ENCODE measurements at regions of chr7 and their contacts with region 1.

Region 1: GRCh38 chr7:45923290-45923689 is 2.2 kb upstream of the IGFBP3 start:
- DNase-seq: peak; percentile 85
- H3K4me3 ChIP-seq: peak overlapping the region in 2 of 4 donors; percentile 56 to 66
- H3K27ac ChIP-seq: peak overlapping the region in 1 of 4 donors; percentile 81
- H3K4me1 ChIP-seq: peaks cover 0 to 47% (median 45%) of the 10 kb centered on the region in 4 donors
- H3K27me3 ChIP-seq: peaks cover 6 to 38% (median 12%) of the 10 kb centered on the region in 3 donors
- CTCF ChIP-seq: peak; percentile 61 to 88 (median 74)
- EP300 ChIP-seq: no peak
- POLR2A ChIP-seq: no peak

Region 2: DNA sequence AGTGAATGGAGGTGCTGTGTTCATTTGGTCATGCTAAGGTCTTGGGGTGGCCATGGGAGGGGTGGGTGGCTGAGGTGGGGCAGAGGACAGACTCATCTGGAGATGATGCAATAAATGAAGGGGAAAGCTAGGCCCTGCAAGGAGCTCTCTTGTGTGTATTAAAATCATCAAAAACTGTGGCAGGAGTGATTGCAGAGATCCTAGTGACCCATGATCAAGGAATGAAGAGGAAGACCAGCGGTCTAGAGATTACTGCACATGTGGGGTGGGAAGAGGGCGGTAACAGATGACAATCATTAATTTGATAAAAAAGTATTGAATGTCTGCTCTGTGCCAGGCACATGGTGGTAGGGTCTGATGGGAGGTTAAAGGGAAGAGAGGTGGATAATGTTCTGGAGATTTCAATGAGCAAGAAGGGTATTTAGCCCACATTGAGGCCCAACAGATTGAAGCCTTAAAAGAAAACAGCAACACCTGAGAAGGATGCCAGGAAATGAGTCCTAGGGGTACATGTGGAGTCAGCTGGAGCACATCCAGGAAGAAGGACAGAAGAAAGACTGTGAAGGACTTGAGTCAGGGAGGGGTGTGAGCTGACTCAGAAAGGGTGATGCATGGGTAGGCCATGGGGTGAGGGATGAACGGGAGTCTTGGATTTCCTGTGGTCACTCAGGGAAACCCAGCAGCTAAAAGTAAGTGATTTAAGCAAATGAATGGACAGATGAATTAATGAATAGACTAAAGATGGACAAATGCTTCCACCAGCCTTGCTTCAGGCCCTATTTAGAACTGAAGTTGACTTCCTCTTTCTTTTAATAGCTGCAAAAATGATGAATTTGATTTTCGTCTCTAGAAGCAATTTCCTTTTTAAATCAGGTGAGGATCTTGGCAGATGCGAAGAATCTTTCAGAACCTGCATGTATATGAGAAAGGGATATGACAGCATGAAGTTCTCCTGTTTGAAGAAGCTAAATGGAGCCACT is 80.9 kb after region 1 on chr7:
- intact Hi-C with region 1: no loop called
- DNase-seq: no peak
- H3K4me3 ChIP-seq: no peak overlapping the region
- H3K27ac ChIP-seq: no peak overlapping the region
- H3K4me1 ChIP-seq: no peaks in the 10 kb centered on the region
- H3K27me3 ChIP-seq: no peaks in the 10 kb centered on the region
- CTCF ChIP-seq: no peak
- EP300 ChIP-seq: no peak
- POLR2A ChIP-seq: no peak

Region 3: DNA sequence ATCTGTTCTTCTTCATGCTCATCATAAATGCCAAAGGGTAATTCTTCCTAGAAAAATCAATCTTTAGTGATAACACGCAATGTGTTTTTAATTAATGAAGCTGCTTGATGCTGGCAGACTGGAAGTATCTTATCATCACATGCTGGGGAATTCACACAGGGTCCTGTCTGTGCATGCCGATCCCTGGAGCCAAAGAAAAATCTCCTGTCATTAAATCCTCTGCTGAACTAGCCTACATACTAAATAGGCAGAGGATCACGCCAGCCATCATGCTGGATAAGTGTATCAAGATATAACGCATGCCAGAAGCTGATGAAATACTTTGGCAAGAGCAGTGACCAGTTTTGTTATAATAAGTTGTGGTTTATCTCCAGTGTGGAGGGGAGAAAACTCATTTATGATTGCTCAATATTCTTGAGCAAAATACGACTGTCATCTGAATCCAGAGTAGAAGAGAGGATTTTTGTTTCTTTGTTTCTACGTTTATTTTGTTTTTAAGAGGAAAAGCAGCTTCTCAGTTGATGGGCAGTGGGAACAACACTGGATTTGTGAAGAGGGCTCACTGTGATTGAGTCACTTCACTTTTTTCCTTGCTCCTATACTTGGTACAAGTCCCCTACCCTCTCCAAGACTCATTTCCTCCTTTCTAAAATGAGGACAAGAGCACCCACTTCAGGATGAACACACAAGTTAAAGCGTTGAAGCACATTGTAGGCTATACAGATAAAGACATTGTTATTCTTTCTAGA is 1009.6 kb after region 1 on chr7:
- intact Hi-C with region 1: loop called (anchors 10 kb)
- DNase-seq: peak; percentile 80
- H3K4me3 ChIP-seq: no peak overlapping the region
- H3K27ac ChIP-seq: peak overlapping the region in 3 of 4 donors; percentile 31 to 61 (median 38)
- H3K4me1 ChIP-seq: peaks cover 0 to 15% (median 12%) of the 10 kb centered on the region in 4 donors
- H3K27me3 ChIP-seq: no peaks in the 10 kb centered on the region
- CTCF ChIP-seq: no peak
- EP300 ChIP-seq: no peak
- POLR2A ChIP-seq: no peak

Region 4: DNA sequence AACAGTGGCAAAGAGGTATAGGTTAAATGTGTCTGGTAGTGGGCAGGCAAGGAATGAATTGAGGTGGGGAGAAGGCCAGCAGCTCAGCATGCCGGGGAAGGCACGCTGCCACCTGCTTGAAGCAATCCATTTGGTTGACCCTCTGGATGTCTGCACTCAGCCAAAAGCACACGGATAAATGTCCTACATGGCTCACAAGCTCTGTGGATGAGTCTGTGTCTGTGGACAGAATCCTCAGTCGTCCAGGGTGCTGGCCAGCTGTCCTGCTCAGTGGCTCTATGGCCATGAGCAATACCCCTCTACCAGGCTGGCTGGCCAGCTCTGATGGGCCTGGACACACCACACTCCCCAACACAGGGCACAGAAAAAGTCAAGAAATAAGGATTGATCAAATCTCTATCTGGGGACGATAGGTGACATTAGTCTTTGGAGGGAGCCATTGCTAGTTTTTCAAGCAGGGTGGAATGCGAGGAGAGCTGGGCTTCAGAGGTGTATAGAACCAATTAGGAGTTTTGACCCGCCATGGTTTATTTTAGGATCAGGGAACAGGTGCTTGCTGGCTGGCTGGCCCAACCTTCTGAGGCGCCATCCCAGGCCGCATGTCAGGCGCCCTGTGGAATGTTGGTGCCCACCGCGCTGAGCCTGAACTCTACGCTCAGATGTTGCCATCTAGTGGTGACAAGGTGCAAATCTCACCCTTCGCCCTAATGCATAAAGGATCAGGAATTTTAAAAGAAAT is 1165.2 kb after region 1 on chr7:
- intact Hi-C with region 1: loop called (anchors 1 kb)
- DNase-seq: peak; percentile 77
- H3K4me3 ChIP-seq: no peak overlapping the region
- H3K27ac ChIP-seq: no peak overlapping the region
- H3K4me1 ChIP-seq: peaks cover 0 to 10% (median 8%) of the 10 kb centered on the region in 4 donors
- H3K27me3 ChIP-seq: no peaks in the 10 kb centered on the region
- CTCF ChIP-seq: peak; percentile 73 to 87 (median 84)
- EP300 ChIP-seq: no peak
- POLR2A ChIP-seq: no peak

Region 5: GRCh38 chr7:47179812-47180515 is 1256.7 kb after region 1 on chr7:
- intact Hi-C with region 1: loop called (anchors 1 kb)
- DNase-seq: no peak
- H3K4me3 ChIP-seq: no peak overlapping the region
- H3K27ac ChIP-seq: peak overlapping the region in 1 of 4 donors; percentile 21
- H3K4me1 ChIP-seq: peaks cover 0 to 54% (median 50%) of the 10 kb centered on the region in 4 donors
- H3K27me3 ChIP-seq: no peaks in the 10 kb centered on the region
- CTCF ChIP-seq: peak; percentile 42 to 83 (median 78)
- EP300 ChIP-seq: no peak
- POLR2A ChIP-seq: no peak

Region 6: DNA sequence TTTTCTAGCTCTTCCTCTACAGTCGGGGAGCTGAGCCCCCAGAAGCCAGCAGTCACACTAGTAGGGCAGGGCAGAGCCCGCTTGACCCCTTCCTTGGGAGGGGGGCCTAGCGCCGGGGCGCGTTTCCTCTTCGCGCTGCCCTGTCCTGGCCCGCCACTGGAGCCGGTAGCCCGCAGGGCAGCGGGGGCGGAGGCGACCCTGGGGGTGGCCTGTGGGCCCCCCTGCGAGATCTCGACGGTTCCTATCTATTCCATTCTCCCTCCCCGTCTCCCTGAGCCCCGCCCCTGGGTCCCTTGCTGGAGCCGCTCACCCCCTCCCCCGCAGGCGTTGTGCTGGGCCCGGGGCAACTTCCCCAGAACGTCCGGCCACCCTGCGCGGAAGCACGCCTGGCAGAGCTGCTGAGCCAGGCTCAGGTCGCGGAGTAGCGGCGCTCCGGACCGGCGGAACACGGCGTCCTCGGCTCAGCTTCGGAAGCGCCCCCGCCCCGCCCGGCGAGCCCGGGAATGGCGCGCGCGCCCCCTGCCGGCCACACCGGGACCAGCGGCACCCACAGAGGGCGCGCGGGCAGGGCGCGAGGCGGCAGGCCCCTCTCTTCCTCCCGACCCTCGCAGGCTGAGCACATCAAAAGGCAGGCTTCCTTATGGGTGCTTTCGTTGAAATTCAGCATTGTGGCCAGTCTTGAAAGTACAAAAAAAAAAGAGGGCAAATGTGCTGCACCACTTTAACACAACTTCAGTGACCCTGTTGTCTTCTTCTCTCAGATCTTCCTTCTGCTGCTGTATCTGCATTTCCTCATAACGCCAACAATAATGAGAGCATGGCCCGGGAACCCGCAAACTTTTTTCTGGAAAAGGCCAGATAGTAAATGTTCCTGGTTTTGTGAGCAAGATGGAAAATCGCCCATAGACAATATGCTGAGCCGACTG is 1331.1 kb after region 1 on chr7:
- intact Hi-C with region 1: loop called (anchors 2 kb)
- DNase-seq: peak; percentile 91
- H3K4me3 ChIP-seq: peak overlapping the region; percentile 33 to 67 (median 60)
- H3K27ac ChIP-seq: peak overlapping the region; percentile 86 to 95 (median 92)
- H3K4me1 ChIP-seq: peaks cover 0 to 50% (median 27%) of the 10 kb centered on the region in 4 donors
- H3K27me3 ChIP-seq: no peaks in the 10 kb centered on the region
- CTCF ChIP-seq: peak in 3 of 4 experiments; percentile 24 to 99 (median 50)
- EP300 ChIP-seq: no peak
- POLR2A ChIP-seq: no peak